A549 (cell line): ENCODE measurements at regions of chr10 and their contacts with region 1.

Region 1: DNA sequence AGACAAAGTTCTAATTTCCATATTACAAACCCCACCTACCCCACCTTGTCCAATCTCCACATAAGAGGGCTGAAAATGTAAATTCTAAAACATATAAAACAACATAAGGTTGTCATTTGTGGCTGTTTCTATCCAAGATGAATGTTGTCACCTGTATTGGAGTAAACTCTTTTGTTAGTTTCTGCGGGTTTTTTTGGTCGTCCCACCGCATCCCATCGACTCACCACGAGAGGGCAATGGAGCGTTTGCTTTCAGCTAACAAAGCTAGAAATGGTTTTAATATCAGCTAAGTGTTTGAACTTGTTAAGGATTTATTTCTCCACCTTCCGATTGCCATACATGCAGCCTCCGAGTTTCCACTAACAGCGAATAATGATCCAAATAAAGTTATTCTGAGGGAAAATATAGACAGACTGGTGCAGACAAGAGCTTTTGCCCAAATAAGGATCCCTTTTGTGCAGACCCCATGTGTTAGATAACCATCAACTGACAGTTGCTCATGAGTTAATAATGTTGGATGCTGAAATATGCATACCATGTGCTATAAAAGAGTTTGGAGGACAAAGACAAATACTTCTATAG is 137.2 kb downstream of the ARID5B start:
- DNase-seq: peak; percentile 74 to 79
- ATAC-seq: peak; percentile 79 to 90; a peak in 5 of 6 replicates
- H3K4me3 ChIP-seq: no peak overlapping the region
- H3K27ac ChIP-seq: peak overlapping the region; percentile 51 to 70
- H3K4me1 ChIP-seq: peaks cover 30% of the 10 kb centered on the region
- CTCF ChIP-seq: peak; percentile 86
- EP300 ChIP-seq: no peak
- POLR2A ChIP-seq: no peak
- RAD21 ChIP-seq: peak; percentile 96 to 98

Region 2: GRCh38 chr10:61970182-61971002 is 68.3 kb before region 1 on chr10:
- CTCF ChIA-PET with region 1: no interaction called
- POLR2A ChIA-PET with region 1: no interaction called
- DNase-seq: no peak
- ATAC-seq: no peak
- H3K4me3 ChIP-seq: no peak overlapping the region
- H3K27ac ChIP-seq: no peak overlapping the region
- H3K4me1 ChIP-seq: peaks cover 19% of the 10 kb centered on the region
- CTCF ChIP-seq: no peak
- EP300 ChIP-seq: no peak
- POLR2A ChIP-seq: no peak
- RAD21 ChIP-seq: no peak

Region 3: GRCh38 chr10:62019685-62020315 is 18.9 kb before region 1 on chr10:
- CTCF ChIA-PET with region 1: interaction called, 32 read pairs
- POLR2A ChIA-PET with region 1: no interaction called
- DNase-seq: no peak
- ATAC-seq: no peak
- H3K4me3 ChIP-seq: no peak overlapping the region
- H3K27ac ChIP-seq: no peak overlapping the region
- H3K4me1 ChIP-seq: no peaks in the 10 kb centered on the region
- CTCF ChIP-seq: no peak
- EP300 ChIP-seq: no peak
- POLR2A ChIP-seq: no peak
- RAD21 ChIP-seq: no peak

Region 4: DNA sequence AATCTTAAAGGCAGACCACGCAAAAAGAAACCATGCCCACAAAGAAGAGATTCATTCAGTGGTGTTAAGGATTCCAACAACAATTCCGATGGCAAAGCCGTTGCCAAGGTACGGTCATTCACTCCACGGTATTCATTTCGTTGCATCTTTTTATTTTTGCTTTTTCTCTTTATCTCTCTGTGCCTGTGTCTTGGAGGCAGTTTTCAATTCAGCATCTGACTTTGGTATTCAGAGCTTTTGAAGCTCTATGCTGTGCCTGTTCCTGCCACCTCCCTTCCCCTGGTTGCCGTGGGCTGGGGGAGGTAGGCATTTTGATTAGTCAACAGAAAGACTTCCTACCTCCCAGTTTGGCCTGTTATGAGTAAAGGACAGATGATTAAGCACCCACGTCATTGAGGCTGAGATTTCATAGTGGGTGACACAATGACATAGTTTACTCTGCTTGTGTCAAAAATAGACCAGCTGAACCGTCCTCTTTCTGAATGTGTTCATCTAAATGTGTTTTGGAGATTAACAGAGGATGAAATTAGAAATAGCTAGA is 12.3 kb after region 1 on chr10:
- CTCF ChIA-PET with region 1: interaction called, 62 read pairs
- POLR2A ChIA-PET with region 1: interaction called, 3 read pairs
- DNase-seq: peak; percentile 66 to 81
- ATAC-seq: peak; percentile 75 to 78
- H3K4me3 ChIP-seq: peak overlapping the region; percentile 37; the same call in 2 of the 3 replicates
- H3K27ac ChIP-seq: peak overlapping the region; percentile 63 to 74
- H3K4me1 ChIP-seq: peaks cover 55% of the 10 kb centered on the region
- CTCF ChIP-seq: no peak
- EP300 ChIP-seq: peak; percentile 72 to 76; a peak in 2 of 5 replicates
- POLR2A ChIP-seq: no peak
- RAD21 ChIP-seq: no peak; a peak in 1 of 5 replicates

Region 5: GRCh38 chr10:62076891-62077290 is 38.2 kb after region 1 on chr10:
- CTCF ChIA-PET with region 1: interaction called, 25 read pairs
- POLR2A ChIA-PET with region 1: no interaction called
- DNase-seq: peak; percentile 69 to 79
- ATAC-seq: peak; percentile 97 to 99
- H3K4me3 ChIP-seq: no peak overlapping the region
- H3K27ac ChIP-seq: peak overlapping the region; percentile 66 to 78
- H3K4me1 ChIP-seq: peaks cover 27% of the 10 kb centered on the region
- CTCF ChIP-seq: peak; percentile 35; the same call in 2 of the 3 replicates
- EP300 ChIP-seq: no peak
- POLR2A ChIP-seq: no peak
- RAD21 ChIP-seq: peak; percentile 65 to 72

Region 6: GRCh38 chr10:62231371-62231770 is 192.7 kb after region 1 on chr10:
- CTCF ChIA-PET with region 1: interaction called, 11 read pairs
- POLR2A ChIA-PET with region 1: interaction called, 3 read pairs
- DNase-seq: peak in 1 of 2 experiments; percentile 36
- ATAC-seq: peak; percentile 56 to 71; a peak in 4 of 6 replicates
- H3K4me3 ChIP-seq: no peak overlapping the region
- H3K27ac ChIP-seq: peak overlapping the region; percentile 61 to 85
- H3K4me1 ChIP-seq: peaks cover 48% of the 10 kb centered on the region
- CTCF ChIP-seq: no peak
- EP300 ChIP-seq: peak in 1 of 2 experiments; percentile 43; a peak in 1 of 5 replicates
- POLR2A ChIP-seq: no peak
- RAD21 ChIP-seq: 0 out of 5 replicates have a peak, but pooled peaks of 1 of the 2 experiments have one; percentile 14